ENCODE measurements at regions of chr5 and their contacts with region 1.

Region 1: GRCh38 chr5:115460472-115460871 is 84.1 kb downstream of the FEM1C start:
- DNase-seq: peak; percentile 70
- H3K4me3 Mint-ChIP-seq: no peak overlapping the region
- H3K27ac Mint-ChIP-seq: no peak overlapping the region
- H3K4me1 Mint-ChIP-seq: peaks cover 20% of the 10 kb centered on the region
- H3K27me3 Mint-ChIP-seq: no peaks in the 10 kb centered on the region
- CTCF ChIP-seq: no peak

Region 2: GRCh38 chr5:115415143-115415491 is 45.4 kb before region 1 on chr5:
- CTCF ChIA-PET with region 1: interaction called, 3 read pairs
- POLR2A ChIA-PET with region 1: interaction called, 9 read pairs
- intact Hi-C with region 1: loop called (anchors 2 kb)
- DNase-seq: peak; percentile 88
- H3K4me3 Mint-ChIP-seq: no peak overlapping the region
- H3K27ac Mint-ChIP-seq: peak overlapping the region; percentile 92
- H3K4me1 Mint-ChIP-seq: peaks cover 43% of the 10 kb centered on the region
- H3K27me3 Mint-ChIP-seq: no peaks in the 10 kb centered on the region
- CTCF ChIP-seq: no peak